Endothelial cell of umbilical vein (primary cell): ENCODE measurements at regions of chr2 and their contacts with region 1.

Region 1: GRCh38 chr2:68487773-68488355 is 20.5 kb downstream of the APLF start:
- DNase-seq: peak; percentile 44
- H3K4me3 ChIP-seq: no peak overlapping the region
- H3K27ac ChIP-seq: no peak overlapping the region
- H3K4me1 ChIP-seq: peaks cover 2% of the 10 kb centered on the region
- H3K27me3 ChIP-seq: no peaks in the 10 kb centered on the region
- CTCF ChIP-seq: peak; percentile 11 to 21
- POLR2A ChIP-seq: no peak

Region 2: GRCh38 chr2:68452168-68452900 is 35.5 kb before region 1 on chr2:
- CTCF ChIA-PET with region 1: interaction called, 14 read pairs
- POLR2A ChIA-PET with region 1: no interaction called
- dilution Hi-C with region 1: no loop called
- intact Hi-C with region 1: no loop called
- DNase-seq: no peak
- H3K4me3 ChIP-seq: no peak overlapping the region
- H3K27ac ChIP-seq: no peak overlapping the region
- H3K4me1 ChIP-seq: no peaks in the 10 kb centered on the region
- H3K27me3 ChIP-seq: no peaks in the 10 kb centered on the region
- CTCF ChIP-seq: no peak
- POLR2A ChIP-seq: no peak

Region 3: GRCh38 chr2:68499133-68499532 is 11.3 kb after region 1 on chr2:
- CTCF ChIA-PET with region 1: interaction called, 35 read pairs
- POLR2A ChIA-PET with region 1: no interaction called
- dilution Hi-C with region 1: no loop called
- intact Hi-C with region 1: no loop called
- DNase-seq: no peak
- H3K4me3 ChIP-seq: no peak overlapping the region
- H3K27ac ChIP-seq: no peak overlapping the region
- H3K4me1 ChIP-seq: no peaks in the 10 kb centered on the region
- H3K27me3 ChIP-seq: no peaks in the 10 kb centered on the region
- CTCF ChIP-seq: no peak
- POLR2A ChIP-seq: no peak

Region 4: GRCh38 chr2:68519236-68519635 is 31.4 kb after region 1 on chr2:
- CTCF ChIA-PET with region 1: interaction called, 11 read pairs
- POLR2A ChIA-PET with region 1: no interaction called
- dilution Hi-C with region 1: no loop called
- intact Hi-C with region 1: no loop called
- DNase-seq: no peak
- H3K4me3 ChIP-seq: no peak overlapping the region
- H3K27ac ChIP-seq: no peak overlapping the region
- H3K4me1 ChIP-seq: no peaks in the 10 kb centered on the region
- H3K27me3 ChIP-seq: no peaks in the 10 kb centered on the region
- CTCF ChIP-seq: no peak
- POLR2A ChIP-seq: no peak

Region 5: GRCh38 chr2:68561372-68561771 is 73.5 kb after region 1 on chr2:
- CTCF ChIA-PET with region 1: interaction called, 10 read pairs
- POLR2A ChIA-PET with region 1: no interaction called
- dilution Hi-C with region 1: no loop called
- intact Hi-C with region 1: no loop called
- DNase-seq: peak; percentile 52
- H3K4me3 ChIP-seq: no peak overlapping the region
- H3K27ac ChIP-seq: no peak overlapping the region
- H3K4me1 ChIP-seq: peaks cover 17% of the 10 kb centered on the region
- H3K27me3 ChIP-seq: peaks cover 13 to 44% of the 10 kb centered on the region in 2 experiments
- CTCF ChIP-seq: no peak
- POLR2A ChIP-seq: no peak

Region 6: DNA sequence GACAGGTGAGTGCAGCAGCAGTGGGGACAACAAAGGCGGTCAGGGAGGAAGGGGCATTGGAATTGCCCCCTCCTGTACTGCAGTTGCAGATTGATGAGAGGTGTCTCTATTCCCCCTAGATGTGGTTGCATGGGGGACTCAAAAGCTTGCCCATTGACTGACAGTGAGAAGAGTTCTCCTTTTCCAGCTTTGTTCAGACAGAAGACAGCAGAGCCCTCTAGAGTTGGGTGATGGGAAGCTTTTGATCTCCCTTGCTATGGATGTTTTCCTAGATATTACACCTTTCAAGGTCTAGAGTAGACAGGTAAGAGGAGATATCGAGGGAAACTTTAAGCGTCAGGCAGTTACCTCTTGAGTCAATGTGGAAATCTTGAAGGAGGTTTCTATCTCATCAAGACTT is 158.4 kb after region 1 on chr2:
- CTCF ChIA-PET with region 1: interaction called, 21 read pairs
- POLR2A ChIA-PET with region 1: no interaction called
- dilution Hi-C with region 1: no loop called
- intact Hi-C with region 1: no loop called
- DNase-seq: no peak
- H3K4me3 ChIP-seq: no peak overlapping the region
- H3K27ac ChIP-seq: no peak overlapping the region
- H3K4me1 ChIP-seq: peaks cover 4% of the 10 kb centered on the region
- H3K27me3 ChIP-seq: peaks cover 53 to 76% of the 10 kb centered on the region in 2 experiments
- CTCF ChIP-seq: no peak
- POLR2A ChIP-seq: no peak

Region 7: GRCh38 chr2:68925295-68925896 is 437.5 kb after region 1 on chr2:
- CTCF ChIA-PET with region 1: interaction called, 74 read pairs
- POLR2A ChIA-PET with region 1: no interaction called
- dilution Hi-C with region 1: no loop called
- intact Hi-C with region 1: loop called (anchors 2 kb)
- DNase-seq: peak; percentile 58
- H3K4me3 ChIP-seq: no peak overlapping the region
- H3K27ac ChIP-seq: no peak overlapping the region
- H3K4me1 ChIP-seq: no peaks in the 10 kb centered on the region
- H3K27me3 ChIP-seq: peaks cover 2 to 9% of the 10 kb centered on the region in 2 experiments
- CTCF ChIP-seq: peak; percentile 83 to 87
- POLR2A ChIP-seq: no peak